ENCODE measurements at regions of chr6 and their contacts with region 1.

Region 1: GRCh38 chr6:40587240-40588069 is at the start of gene LRFN2:
- DNase-seq: peak; percentile 33 to 54
- ATAC-seq: peak; percentile 88
- H3K4me3 ChIP-seq: peak within 1 kb of the TSS; percentile 37 to 64 (median 54)
- H3K27ac ChIP-seq: peak within 1 kb of the TSS; percentile 43 to 71 (median 56)
- H3K4me1 ChIP-seq: peaks cover 4 to 10% of the 10 kb centered on the region in 2 donors
- H3K27me3 ChIP-seq: peaks cover 0 to 4% (median 0%) of the 10 kb centered on the region in 3 donors
- CTCF ChIP-seq: peak; percentile 60 to 88 (median 78)
- POLR2A ChIP-seq: no peak
- total RNA-seq, gene LRFN2: not detected

Region 2: GRCh38 chr6:40328405-40328987 is 259.0 kb before region 1 on chr6:
- in situ Hi-C with region 1: loop called in 3 of 4 experiments (anchors 10 to 25 kb)
- intact Hi-C with region 1: loop called (anchors 2 kb)
- DNase-seq: peak in 1 of 2 donors; percentile 34
- ATAC-seq: peak in 1 of 2 donors; percentile 63
- H3K4me3 ChIP-seq: no peak overlapping the region
- H3K27ac ChIP-seq: no peak overlapping the region
- H3K4me1 ChIP-seq: peaks cover 9% of the 10 kb centered on the region in 2 donors
- H3K27me3 ChIP-seq: no peaks in the 10 kb centered on the region
- CTCF ChIP-seq: peak; percentile 46 to 64 (median 61)
- POLR2A ChIP-seq: no peak

Region 3: DNA sequence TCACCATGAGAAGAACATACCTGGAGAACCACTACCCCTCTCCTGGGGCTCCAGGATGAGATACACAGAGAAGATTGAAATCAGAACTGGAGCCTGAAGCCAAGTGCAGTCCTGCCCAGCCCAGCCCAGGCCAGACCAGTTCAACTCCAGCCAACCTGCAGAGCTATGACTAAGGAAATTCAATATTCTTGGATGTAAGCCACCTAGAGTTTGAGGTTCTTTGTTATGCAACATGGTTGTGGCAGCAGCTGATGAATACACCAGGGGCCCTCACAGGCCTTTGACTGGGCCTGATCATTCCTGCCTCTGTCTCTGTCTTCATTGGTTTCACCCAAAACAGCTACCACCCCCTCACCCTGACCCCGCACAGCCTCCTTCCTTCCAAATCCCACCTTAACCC is 168.1 kb before region 1 on chr6:
- in situ Hi-C with region 1: no loop called
- intact Hi-C with region 1: loop called (anchors 5 kb)
- DNase-seq: peak; percentile 36 to 78
- ATAC-seq: peak; percentile 96 to 98
- H3K4me3 ChIP-seq: no peak overlapping the region
- H3K27ac ChIP-seq: peak overlapping the region in 3 of 4 donors; percentile 18 to 67 (median 60)
- H3K4me1 ChIP-seq: peaks cover 28 to 34% of the 10 kb centered on the region in 2 donors
- H3K27me3 ChIP-seq: no peaks in the 10 kb centered on the region
- CTCF ChIP-seq: no peak
- POLR2A ChIP-seq: no peak

Region 4: DNA sequence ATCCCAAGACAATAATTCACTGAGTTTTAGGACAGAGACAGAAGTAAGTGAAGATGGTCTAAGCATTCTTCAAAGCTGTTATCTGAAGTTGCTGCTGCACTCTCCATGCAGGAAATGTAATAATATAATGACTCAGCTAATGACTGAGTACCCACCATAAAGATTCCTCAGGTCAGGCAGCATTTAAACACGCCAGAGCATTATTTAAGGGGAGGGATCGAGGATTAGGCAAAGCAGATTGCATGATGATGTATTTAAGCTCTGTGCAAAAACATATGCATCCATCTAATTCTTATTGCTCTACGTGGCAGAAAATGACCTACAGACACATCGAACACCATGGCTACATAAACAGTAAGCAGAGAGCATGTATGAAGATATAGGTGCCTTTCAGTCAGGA is 235.2 kb after region 1 on chr6:
- in situ Hi-C with region 1: no loop called
- intact Hi-C with region 1: loop called (anchors 10 kb)
- DNase-seq: no peak
- ATAC-seq: no peak
- H3K4me3 ChIP-seq: no peak overlapping the region
- H3K27ac ChIP-seq: no peak overlapping the region
- H3K4me1 ChIP-seq: peaks cover 9 to 18% of the 10 kb centered on the region in 2 donors
- H3K27me3 ChIP-seq: no peaks in the 10 kb centered on the region
- CTCF ChIP-seq: no peak
- POLR2A ChIP-seq: no peak

Region 5: GRCh38 chr6:40874495-40874894 is 287.0 kb after region 1 on chr6:
- in situ Hi-C with region 1: no loop called
- intact Hi-C with region 1: no loop called
- DNase-seq: no peak
- ATAC-seq: no peak
- H3K4me3 ChIP-seq: no peak overlapping the region
- H3K27ac ChIP-seq: no peak overlapping the region
- H3K4me1 ChIP-seq: no peaks in the 10 kb centered on the region
- H3K27me3 ChIP-seq: no peaks in the 10 kb centered on the region
- CTCF ChIP-seq: no peak
- POLR2A ChIP-seq: no peak

Region 6: DNA sequence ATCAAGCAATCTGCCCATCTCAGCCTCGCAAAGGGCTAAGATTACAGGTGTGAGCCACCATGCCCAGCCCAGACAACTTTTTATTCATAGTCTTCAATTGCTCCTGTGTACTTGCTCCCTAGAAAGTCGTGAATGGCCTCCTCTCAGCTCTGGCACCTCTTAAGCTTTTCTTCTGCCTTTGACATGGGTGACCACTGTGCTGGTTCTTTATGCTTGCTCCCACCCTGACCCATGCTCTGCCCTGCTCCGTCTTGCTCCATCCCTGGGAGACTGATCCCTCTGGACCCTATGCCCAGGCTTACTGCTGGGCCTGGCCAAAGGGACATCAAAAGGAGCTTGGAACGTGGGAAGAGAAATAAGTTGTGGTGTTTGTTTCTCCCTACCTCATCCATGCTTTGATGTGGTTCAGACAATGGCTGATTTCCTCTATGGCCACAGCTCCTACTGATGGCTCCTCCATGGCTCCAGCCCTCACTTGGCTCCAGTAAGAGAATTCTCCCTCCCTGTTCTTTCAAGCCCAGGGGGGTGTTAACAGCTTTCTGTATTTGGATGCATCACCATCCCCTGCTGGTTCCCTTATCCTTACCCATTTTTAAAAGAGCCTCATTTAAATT is 583.2 kb after region 1 on chr6:
- in situ Hi-C with region 1: no loop called
- intact Hi-C with region 1: no loop called
- DNase-seq: no peak
- ATAC-seq: no peak
- H3K4me3 ChIP-seq: no peak overlapping the region
- H3K27ac ChIP-seq: no peak overlapping the region
- H3K4me1 ChIP-seq: no peaks in the 10 kb centered on the region
- H3K27me3 ChIP-seq: no peaks in the 10 kb centered on the region
- CTCF ChIP-seq: no peak
- POLR2A ChIP-seq: no peak